ENCODE measurements at regions of chr17 and their contacts with region 1.

Region 1: DNA sequence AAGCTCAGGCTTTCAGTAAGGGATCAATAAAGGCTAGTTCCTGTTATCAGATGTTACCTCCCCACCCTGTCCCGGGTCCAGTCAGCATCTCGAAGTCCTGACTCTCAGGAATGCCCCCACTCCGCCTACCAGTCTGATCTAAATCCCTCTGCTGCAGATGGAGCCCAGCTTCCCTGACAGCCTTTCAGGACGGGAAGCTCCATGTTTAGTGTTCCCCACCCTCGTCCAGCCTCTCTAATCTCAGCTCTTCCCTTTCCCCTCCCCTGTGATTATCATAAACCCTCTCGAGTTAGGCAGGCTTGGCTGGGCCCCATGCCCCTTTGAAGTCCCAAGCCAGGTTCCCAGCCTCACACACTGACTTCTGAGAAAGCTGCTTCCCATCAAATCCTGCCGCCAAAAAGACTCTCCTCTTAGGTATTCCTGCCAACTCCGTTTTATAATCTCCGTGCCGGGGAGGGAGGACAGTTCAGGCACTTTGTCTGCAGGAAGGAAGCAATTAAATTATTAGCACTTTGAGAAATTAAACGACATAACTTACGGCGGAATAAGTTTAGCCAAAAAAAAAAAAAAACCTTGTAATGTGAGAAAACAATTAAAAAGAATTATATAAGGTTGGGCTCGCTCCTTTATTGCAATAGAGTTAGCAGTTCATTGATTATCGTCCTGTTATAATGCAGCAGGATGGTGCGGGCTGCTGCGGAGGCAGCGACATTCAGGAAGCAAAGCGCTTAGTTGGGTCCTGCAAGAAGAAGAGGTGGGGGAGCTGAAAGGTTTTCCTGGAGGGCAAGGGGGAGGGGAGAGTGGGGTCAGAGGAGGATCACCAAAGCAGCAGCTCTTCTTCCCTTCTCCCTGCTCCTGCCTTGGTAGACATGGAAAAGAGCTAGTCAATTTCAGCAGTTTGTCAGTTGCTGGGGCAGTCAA is 16.8 kb upstream of the ETV4 start:
- DNase-seq: no peak
- H3K4me3 ChIP-seq: peak overlapping the region in 1 of 3 experiments; percentile 9
- H3K27ac ChIP-seq: no peak overlapping the region
- H3K4me1 ChIP-seq: peaks cover 7% of the 10 kb centered on the region
- H3K27me3 ChIP-seq: peaks cover 16% of the 10 kb centered on the region in 2 experiments
- CTCF ChIP-seq: no peak
- POLR2A ChIP-seq: no peak

Region 2: DNA sequence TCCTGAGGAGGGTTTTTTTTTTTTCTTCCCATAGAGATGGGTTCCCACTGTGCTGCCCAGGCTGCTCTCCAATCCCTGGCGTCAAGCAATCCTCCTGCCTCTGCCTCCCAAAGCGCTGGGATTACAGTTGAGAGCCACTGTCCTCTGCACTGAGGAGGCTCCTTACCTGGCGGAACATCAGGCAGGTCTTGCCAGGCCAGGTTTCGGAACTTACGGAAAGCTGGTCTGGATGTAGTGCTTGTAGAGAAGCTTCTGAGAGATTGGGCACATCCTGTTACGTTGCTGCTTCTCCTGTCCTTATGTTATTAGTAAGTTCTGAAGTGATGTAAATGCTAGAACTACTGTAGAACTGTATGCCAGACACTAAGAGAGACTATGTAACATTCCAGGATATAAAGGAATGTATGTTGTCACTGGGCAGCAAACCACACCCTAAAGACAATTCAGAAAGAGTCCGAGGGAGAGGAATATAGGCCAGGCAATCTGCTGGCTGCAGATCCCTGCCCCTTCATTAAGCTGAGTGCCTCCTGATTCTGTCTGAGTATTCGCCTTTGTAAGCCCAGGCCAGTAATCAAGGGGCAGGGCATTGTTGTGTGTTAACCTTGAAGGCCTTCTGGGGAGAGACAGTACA is 37.9 kb before region 1 on chr17:
- CTCF ChIA-PET with region 1: interaction called, 6 read pairs
- POLR2A ChIA-PET with region 1: no interaction called
- dilution Hi-C with region 1: no loop called
- intact Hi-C with region 1: loop called (anchors 5 kb)
- DNase-seq: no peak
- H3K4me3 ChIP-seq: no peak overlapping the region
- H3K27ac ChIP-seq: no peak overlapping the region
- H3K4me1 ChIP-seq: peaks cover 7% of the 10 kb centered on the region
- H3K27me3 ChIP-seq: no peaks in the 10 kb centered on the region
- CTCF ChIP-seq: no peak
- POLR2A ChIP-seq: no peak

Region 3: DNA sequence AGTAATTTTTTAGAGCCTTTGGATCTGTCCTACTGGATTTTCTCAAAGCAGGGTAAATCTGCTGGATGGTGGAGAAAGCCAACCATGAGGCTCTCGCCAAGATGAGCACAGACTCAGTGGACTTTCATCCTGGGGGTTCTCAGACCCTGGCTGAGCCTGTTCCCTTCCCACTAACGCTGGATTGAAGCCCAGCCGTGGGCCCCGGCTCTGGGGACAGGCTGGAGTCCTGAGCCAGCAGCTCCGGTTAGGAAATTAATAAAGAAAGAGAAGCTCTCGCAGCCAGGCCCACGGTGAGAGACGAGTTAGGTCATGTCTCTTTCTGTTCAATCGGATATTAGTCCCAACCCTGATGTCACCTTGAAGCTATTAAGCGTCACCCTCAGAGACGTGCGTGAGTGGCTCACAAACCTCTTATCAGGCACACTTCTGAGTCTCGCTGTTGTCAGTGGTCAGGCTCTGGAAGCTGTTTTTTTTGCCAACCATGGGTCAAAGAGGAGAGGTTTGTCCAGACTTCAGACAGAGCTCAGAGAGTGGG is 71.7 kb after region 1 on chr17:
- CTCF ChIA-PET with region 1: no interaction called
- POLR2A ChIA-PET with region 1: no interaction called
- dilution Hi-C with region 1: no loop called
- intact Hi-C with region 1: no loop called
- DNase-seq: no peak
- H3K4me3 ChIP-seq: no peak overlapping the region
- H3K27ac ChIP-seq: no peak overlapping the region
- H3K4me1 ChIP-seq: peaks cover 8% of the 10 kb centered on the region
- H3K27me3 ChIP-seq: no peaks in the 10 kb centered on the region
- CTCF ChIP-seq: no peak
- POLR2A ChIP-seq: no peak

Region 4: GRCh38 chr17:43791589-43791988 is 228.7 kb after region 1 on chr17:
- CTCF ChIA-PET with region 1: no interaction called
- POLR2A ChIA-PET with region 1: interaction called, 10 read pairs
- dilution Hi-C with region 1: no loop called
- intact Hi-C with region 1: no loop called
- DNase-seq: peak; percentile 40
- H3K4me3 ChIP-seq: no peak overlapping the region
- H3K27ac ChIP-seq: no peak overlapping the region
- H3K4me1 ChIP-seq: no peaks in the 10 kb centered on the region
- H3K27me3 ChIP-seq: peaks cover 0 to 1% of the 10 kb centered on the region in 2 experiments
- CTCF ChIP-seq: no peak
- POLR2A ChIP-seq: no peak